ENCODE measurements at regions of chr5 and their contacts with region 1.

Region 1: DNA sequence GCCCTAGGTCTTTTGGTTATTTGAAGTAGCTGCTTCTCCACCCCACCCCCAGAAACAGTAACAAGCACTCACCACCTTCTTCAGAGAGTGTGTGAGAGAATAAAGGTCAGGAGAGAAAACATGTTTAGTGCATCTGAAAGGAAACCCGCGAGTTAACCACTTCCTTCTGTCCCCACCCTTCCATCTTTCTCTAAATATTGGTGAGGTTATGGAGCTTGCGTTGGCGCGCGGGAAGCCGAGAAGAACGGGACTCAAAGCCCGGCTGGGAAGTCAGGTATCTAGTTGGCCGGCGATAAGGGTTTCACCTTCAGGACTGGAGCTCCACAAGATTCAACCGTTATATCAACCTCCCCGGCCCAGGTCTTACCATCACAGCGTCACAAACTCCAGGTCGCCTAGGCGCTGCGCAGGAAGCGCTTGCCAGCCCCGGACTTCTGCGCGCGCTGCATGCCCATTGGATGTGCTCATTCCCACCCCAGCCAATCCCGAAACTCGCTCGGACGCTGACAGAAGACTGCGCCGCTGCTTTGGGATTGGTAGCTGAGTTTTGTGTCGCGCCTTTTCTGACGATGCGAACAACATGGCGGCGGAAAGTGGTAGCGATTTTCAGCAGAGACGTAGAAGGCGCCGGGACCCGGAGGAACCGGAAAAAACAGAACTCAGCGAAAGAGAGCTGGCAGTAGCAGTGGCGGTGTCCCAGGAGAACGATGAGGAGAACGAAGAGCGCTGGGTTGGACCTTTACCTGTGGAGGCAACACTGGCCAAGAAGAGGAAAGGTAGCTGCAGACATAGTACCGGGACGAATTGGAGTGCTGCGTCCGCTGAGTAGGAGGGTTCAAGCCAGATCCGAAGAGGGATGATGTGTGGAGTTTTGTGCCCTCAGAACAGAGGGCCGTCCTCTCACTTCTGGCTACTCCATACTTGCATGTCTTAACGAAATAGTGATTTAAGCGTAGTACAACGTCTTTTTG is at the starts of genes CENPK and PPWD1:
- DNase-seq: peak; percentile 91 to 96 (median 93)
- H3K4me3 ChIP-seq: peak within 1 kb of the TSS; percentile 89
- H3K4me3 Mint-ChIP-seq: peak within 1 kb of the TSS; percentile 93 to 99 (median 97)
- H3K27ac ChIP-seq: peak within 1 kb of the TSS; percentile 97
- H3K27ac Mint-ChIP-seq: peak within 1 kb of the TSS; percentile 93 to 100 (median 98)
- H3K4me1 ChIP-seq: peaks cover 36% of the 10 kb centered on the region
- H3K4me1 Mint-ChIP-seq: peaks cover 59 to 78% (median 71%) of the 10 kb centered on the region in 3 donors
- H3K27me3 ChIP-seq: no peaks in the 10 kb centered on the region
- H3K27me3 Mint-ChIP-seq: no peaks in the 10 kb centered on the region
- total RNA-seq, gene CENPK: 65.4 to 67.6 TPM
- total RNA-seq, gene PPWD1: 46.4 to 50.5 TPM

Region 2: GRCh38 chr5:64768358-64769312 is 794.4 kb before region 1 on chr5 and contains the starts of genes CWC27 and SREK1IP1:
- CTCF ChIA-PET with region 1: no interaction called
- POLR2A ChIA-PET with region 1: interaction called, 10 read pairs
- DNase-seq: peak; percentile 62 to 88 (median 79)
- H3K4me3 ChIP-seq: peak within 1 kb of the TSS; percentile 92
- H3K4me3 Mint-ChIP-seq: peak within 1 kb of the TSS; percentile 93 to 100 (median 99)
- H3K27ac ChIP-seq: peak within 1 kb of the TSS; percentile 93
- H3K27ac Mint-ChIP-seq: peak within 1 kb of the TSS; percentile 86 to 100 (median 97)
- H3K4me1 ChIP-seq: peaks cover 34% of the 10 kb centered on the region
- H3K4me1 Mint-ChIP-seq: peaks cover 64 to 83% (median 77%) of the 10 kb centered on the region in 3 donors
- H3K27me3 ChIP-seq: no peaks in the 10 kb centered on the region
- H3K27me3 Mint-ChIP-seq: no peaks in the 10 kb centered on the region
- total RNA-seq, gene CWC27: 36.3 to 38.0 TPM
- total RNA-seq, gene SREK1IP1: 27.3 to 28.2 TPM

Region 3: DNA sequence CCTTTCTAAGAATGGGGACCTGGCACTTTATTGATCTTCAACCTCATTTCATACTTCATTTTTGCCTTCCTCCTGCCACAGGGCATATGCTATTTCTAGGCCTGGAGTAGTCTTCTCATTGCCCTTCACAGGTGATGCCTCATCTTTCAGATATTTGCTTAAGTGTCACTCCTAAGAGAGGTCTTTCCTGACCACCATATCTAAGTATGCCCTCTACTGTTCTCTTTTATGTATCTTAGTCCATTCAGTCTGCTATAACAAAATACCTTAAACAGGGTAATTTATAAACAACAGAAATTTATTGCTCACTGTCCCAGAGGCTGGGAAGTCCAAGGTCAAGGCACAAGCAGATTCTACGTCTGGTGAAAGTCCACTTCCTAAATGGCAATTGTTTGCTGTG is 180.4 kb before region 1 on chr5:
- CTCF ChIA-PET with region 1: no interaction called
- POLR2A ChIA-PET with region 1: no interaction called
- DNase-seq: no peak
- H3K4me3 ChIP-seq: no peak overlapping the region
- H3K4me3 Mint-ChIP-seq: no peak overlapping the region
- H3K27ac ChIP-seq: no peak overlapping the region
- H3K27ac Mint-ChIP-seq: no peak overlapping the region
- H3K4me1 ChIP-seq: no peaks in the 10 kb centered on the region
- H3K4me1 Mint-ChIP-seq: no peaks in the 10 kb centered on the region
- H3K27me3 ChIP-seq: no peaks in the 10 kb centered on the region
- H3K27me3 Mint-ChIP-seq: no peaks in the 10 kb centered on the region

Region 4: DNA sequence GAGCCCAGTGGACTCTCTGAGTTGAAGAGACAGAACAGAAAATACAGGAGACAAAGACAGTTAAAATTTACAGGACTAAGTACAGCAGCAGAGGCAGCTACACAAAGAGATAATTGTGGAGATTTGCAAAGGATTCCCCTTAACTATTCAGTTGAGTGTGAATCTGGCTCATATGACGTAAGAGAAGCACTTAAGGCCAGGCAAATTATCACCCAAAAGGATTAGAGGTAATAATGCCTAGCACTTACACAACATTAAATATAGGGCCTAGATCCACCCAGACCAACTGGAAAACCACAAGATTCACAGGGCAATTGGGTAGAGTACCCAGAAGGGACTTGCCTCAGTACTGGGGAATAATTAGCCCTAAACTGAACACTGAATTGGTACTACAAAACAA is 122.6 kb before region 1 on chr5:
- CTCF ChIA-PET with region 1: no interaction called
- POLR2A ChIA-PET with region 1: no interaction called
- DNase-seq: no peak
- H3K4me3 ChIP-seq: no peak overlapping the region
- H3K4me3 Mint-ChIP-seq: no peak overlapping the region
- H3K27ac ChIP-seq: no peak overlapping the region
- H3K27ac Mint-ChIP-seq: no peak overlapping the region
- H3K4me1 ChIP-seq: no peaks in the 10 kb centered on the region
- H3K4me1 Mint-ChIP-seq: no peaks in the 10 kb centered on the region
- H3K27me3 ChIP-seq: no peaks in the 10 kb centered on the region
- H3K27me3 Mint-ChIP-seq: no peaks in the 10 kb centered on the region

Region 5: DNA sequence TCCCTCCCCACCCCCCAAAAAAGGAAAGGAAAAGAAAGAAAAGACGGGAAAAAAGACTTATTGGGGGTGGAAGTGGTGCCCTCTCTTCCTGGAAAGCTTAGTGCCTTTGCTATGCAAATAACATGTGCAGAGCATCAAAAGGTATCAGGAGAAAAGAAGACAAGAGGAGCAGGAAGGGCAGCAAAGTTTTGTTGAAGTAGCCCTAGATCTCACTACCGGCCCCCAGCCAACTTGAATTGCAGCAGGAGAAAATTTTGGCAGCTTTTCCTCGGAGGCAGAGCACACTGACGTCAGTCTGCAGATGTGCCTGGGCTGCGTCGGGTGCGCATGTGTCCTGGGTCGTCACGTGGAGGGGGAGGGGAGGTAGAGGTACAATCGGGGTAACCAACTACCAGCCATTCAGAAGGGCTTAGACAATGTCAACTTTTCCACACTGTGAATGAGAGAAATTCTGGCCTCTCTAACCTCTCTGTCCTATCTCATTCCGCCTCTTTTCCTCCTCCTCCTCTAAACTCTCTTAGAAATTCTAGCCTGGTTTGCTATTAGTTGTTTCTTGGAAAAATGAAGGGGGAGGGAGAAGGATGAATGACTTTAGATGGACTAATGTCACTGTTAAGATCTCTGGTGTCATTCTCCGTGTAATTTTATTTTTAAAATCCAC is 81.3 kb before region 1 on chr5 and contains the start of gene ADAMTS6:
- CTCF ChIA-PET with region 1: interaction called, 5 read pairs
- POLR2A ChIA-PET with region 1: interaction called, 21 read pairs
- DNase-seq: peak; percentile 64 to 84 (median 72)
- H3K4me3 ChIP-seq: peak within 1 kb of the TSS; percentile 80
- H3K4me3 Mint-ChIP-seq: no peak within 1 kb of the TSS
- H3K27ac ChIP-seq: peak within 1 kb of the TSS; percentile 56
- H3K27ac Mint-ChIP-seq: peak within 1 kb of the TSS; percentile 73 to 98 (median 93)
- H3K4me1 ChIP-seq: peaks cover 20% of the 10 kb centered on the region
- H3K4me1 Mint-ChIP-seq: peaks cover 6 to 18% (median 9%) of the 10 kb centered on the region in 3 donors
- H3K27me3 ChIP-seq: no peaks in the 10 kb centered on the region
- H3K27me3 Mint-ChIP-seq: peaks cover 0 to 3% of the 10 kb centered on the region in 2 donors
- total RNA-seq, gene ADAMTS6: 0.93 to 1.2 TPM

Region 6: GRCh38 chr5:65624571-65625555 is 61.8 kb after region 1 on chr5 and contains the starts of genes SHLD3 and TRAPPC13:
- CTCF ChIA-PET with region 1: no interaction called
- POLR2A ChIA-PET with region 1: interaction called, 42 read pairs
- DNase-seq: peak; percentile 77 to 93 (median 90)
- H3K4me3 ChIP-seq: peak within 1 kb of the TSS; percentile 62
- H3K4me3 Mint-ChIP-seq: peak within 1 kb of the TSS; percentile 97 to 100 (median 99)
- H3K27ac ChIP-seq: peak within 1 kb of the TSS; percentile 91
- H3K27ac Mint-ChIP-seq: peak within 1 kb of the TSS; percentile 97 to 100 (median 99)
- H3K4me1 ChIP-seq: peaks cover 31% of the 10 kb centered on the region
- H3K4me1 Mint-ChIP-seq: peaks cover 46 to 66% (median 57%) of the 10 kb centered on the region in 3 donors
- H3K27me3 ChIP-seq: no peaks in the 10 kb centered on the region
- H3K27me3 Mint-ChIP-seq: peaks cover 0 to 3% of the 10 kb centered on the region in 2 donors
- total RNA-seq, gene SHLD3: 8.2 to 8.5 TPM
- total RNA-seq, gene TRAPPC13: 24.1 to 25.2 TPM

Region 7: GRCh38 chr5:65925601-65926275 is 362.7 kb after region 1 on chr5:
- CTCF ChIA-PET with region 1: no interaction called
- POLR2A ChIA-PET with region 1: interaction called, 13 read pairs
- DNase-seq: peak; percentile 73 to 86 (median 83)
- H3K4me3 ChIP-seq: peak overlapping the region; percentile 73
- H3K4me3 Mint-ChIP-seq: peak overlapping the region; percentile 90 to 99 (median 92)
- H3K27ac ChIP-seq: peak overlapping the region; percentile 90
- H3K27ac Mint-ChIP-seq: peak overlapping the region; percentile 86 to 98 (median 95)
- H3K4me1 ChIP-seq: peaks cover 37% of the 10 kb centered on the region
- H3K4me1 Mint-ChIP-seq: peaks cover 36 to 53% (median 53%) of the 10 kb centered on the region in 3 donors
- H3K27me3 ChIP-seq: no peaks in the 10 kb centered on the region
- H3K27me3 Mint-ChIP-seq: peaks cover 0 to 5% of the 10 kb centered on the region in 2 donors

Region 8: DNA sequence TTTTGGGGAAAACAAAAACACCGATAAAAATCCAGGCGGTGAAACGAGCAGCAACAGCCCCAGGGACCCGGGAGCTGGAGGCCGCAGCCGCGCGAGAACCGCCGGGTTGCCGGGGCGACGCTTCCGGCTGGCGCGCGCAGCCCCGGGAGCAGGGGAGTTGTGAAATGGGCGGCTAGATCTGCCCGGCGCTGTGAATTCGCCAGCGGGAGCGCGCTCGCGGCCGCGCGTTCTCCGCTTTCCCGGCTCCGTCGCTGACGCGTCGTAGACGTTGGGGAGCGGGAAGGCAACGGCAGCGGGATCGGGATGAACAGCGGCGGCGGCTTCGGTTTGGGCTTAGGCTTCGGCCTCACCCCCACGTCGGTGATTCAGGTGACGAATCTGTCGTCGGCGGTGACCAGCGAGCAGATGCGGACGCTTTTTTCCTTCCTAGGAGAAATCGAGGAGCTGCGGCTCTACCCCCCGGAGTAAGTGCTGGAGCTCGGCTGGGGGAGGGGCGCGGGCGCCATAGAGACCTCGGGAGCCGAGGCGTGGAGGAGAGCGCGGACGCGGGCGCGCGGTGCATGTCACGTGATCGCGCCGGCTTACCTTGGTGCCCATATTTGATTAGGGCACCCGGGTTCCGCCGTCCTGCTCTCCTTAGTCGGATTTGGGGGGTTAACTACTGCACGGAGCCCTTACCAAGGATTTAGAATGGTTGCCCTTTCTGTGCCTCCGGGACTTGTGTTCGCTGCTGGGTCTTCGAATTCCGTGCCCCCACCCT is 581.2 kb after region 1 on chr5 and contains the start of gene SREK1:
- CTCF ChIA-PET with region 1: no interaction called
- POLR2A ChIA-PET with region 1: interaction called, 10 read pairs
- DNase-seq: peak; percentile 83 to 90 (median 87)
- H3K4me3 ChIP-seq: peak within 1 kb of the TSS; percentile 70
- H3K4me3 Mint-ChIP-seq: peak within 1 kb of the TSS; percentile 98 to 100 (median 99)
- H3K27ac ChIP-seq: peak within 1 kb of the TSS; percentile 99
- H3K27ac Mint-ChIP-seq: peak within 1 kb of the TSS; percentile 99 to 100 (median 100)
- H3K4me1 ChIP-seq: peaks cover 39% of the 10 kb centered on the region
- H3K4me1 Mint-ChIP-seq: peaks cover 31 to 61% (median 40%) of the 10 kb centered on the region in 3 donors
- H3K27me3 ChIP-seq: no peaks in the 10 kb centered on the region
- H3K27me3 Mint-ChIP-seq: peaks cover 0 to 4% of the 10 kb centered on the region in 2 donors
- total RNA-seq, gene SREK1: 51.1 to 54.7 TPM